ENCODE measurements at regions of chr6 and their contacts with region 1.

Region 1: GRCh38 chr6:52670502-52671409 is at the start of gene TMEM14A:
- DNase-seq: peak; percentile 75 to 96 (median 90)
- ATAC-seq: peak; percentile 97
- H3K4me3 ChIP-seq: peak within 1 kb of the TSS; percentile 78 to 83
- H3K4me3 Mint-ChIP-seq: peak within 1 kb of the TSS; percentile 90
- H3K27ac ChIP-seq: peak within 1 kb of the TSS; percentile 28 to 36
- H3K27ac Mint-ChIP-seq: peak within 1 kb of the TSS; percentile 81
- H3K4me1 ChIP-seq: peaks cover 13% of the 10 kb centered on the region
- H3K4me1 Mint-ChIP-seq: peaks cover 30% of the 10 kb centered on the region
- H3K27me3 ChIP-seq: no peaks in the 10 kb centered on the region
- H3K27me3 Mint-ChIP-seq: no peaks in the 10 kb centered on the region
- CTCF ChIP-seq: no peak
- total RNA-seq, gene TMEM14A: 1.7 to 1.8 TPM

Region 2: DNA sequence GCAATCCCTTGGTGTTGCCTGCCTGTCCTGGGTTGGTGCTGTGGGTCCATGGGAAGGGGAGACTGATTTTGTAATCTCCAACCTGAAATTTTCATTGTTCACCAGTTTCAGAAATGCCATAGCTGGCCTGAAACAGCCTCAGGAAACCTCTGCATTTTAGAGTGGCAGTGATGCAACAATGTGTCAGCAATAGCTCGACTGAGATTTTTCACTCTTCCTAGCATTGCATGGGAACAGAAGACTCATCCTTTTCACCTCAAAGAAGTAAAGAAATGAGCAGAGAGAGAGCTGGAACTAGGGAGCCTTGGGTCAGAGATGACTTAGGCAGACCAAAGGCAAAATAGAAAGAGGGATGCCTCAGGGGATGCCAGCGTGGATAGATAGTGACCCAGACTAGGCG is 23.6 kb before region 1 on chr6:
- CTCF ChIA-PET with region 1: interaction called, 23 read pairs
- POLR2A ChIA-PET with region 1: no interaction called
- intact Hi-C with region 1: loop called in 1 of 2 experiments (anchors 2 kb)
- DNase-seq: no peak
- ATAC-seq: no peak
- H3K4me3 ChIP-seq: no peak overlapping the region
- H3K4me3 Mint-ChIP-seq: no peak overlapping the region
- H3K27ac ChIP-seq: no peak overlapping the region
- H3K27ac Mint-ChIP-seq: no peak overlapping the region
- H3K4me1 ChIP-seq: no peaks in the 10 kb centered on the region
- H3K4me1 Mint-ChIP-seq: peaks cover 5% of the 10 kb centered on the region
- H3K27me3 ChIP-seq: no peaks in the 10 kb centered on the region
- H3K27me3 Mint-ChIP-seq: peaks cover 8% of the 10 kb centered on the region
- CTCF ChIP-seq: no peak

Region 3: GRCh38 chr6:52653151-52653550 is 17.6 kb before region 1 on chr6:
- CTCF ChIA-PET with region 1: interaction called, 23 read pairs
- POLR2A ChIA-PET with region 1: no interaction called
- intact Hi-C with region 1: loop called in 1 of 2 experiments (anchors 2 kb)
- DNase-seq: no peak
- ATAC-seq: no peak
- H3K4me3 ChIP-seq: no peak overlapping the region
- H3K4me3 Mint-ChIP-seq: no peak overlapping the region
- H3K27ac ChIP-seq: no peak overlapping the region
- H3K27ac Mint-ChIP-seq: no peak overlapping the region
- H3K4me1 ChIP-seq: no peaks in the 10 kb centered on the region
- H3K4me1 Mint-ChIP-seq: peaks cover 5% of the 10 kb centered on the region
- H3K27me3 ChIP-seq: peaks cover 0 to 2% of the 10 kb centered on the region in 2 experiments
- H3K27me3 Mint-ChIP-seq: peaks cover 8% of the 10 kb centered on the region
- CTCF ChIP-seq: no peak

Region 4: DNA sequence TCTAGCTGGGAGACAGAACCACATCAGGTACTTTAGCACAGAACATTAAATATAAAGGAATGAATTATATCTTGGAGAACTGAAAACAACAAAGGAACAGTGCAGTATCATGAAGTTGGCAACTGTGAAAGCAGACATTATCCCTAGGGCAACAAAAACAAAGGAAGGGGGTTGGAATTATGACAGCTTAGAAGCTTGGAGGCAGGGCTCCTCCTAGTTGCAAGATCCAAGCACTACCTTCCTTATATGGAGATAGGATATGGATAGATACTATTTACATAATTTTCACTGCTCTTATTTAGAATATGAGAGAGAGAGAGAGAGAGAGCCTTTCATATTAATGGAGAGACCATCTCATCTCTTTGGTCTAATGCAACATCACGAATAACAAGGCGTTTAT is 27.1 kb after region 1 on chr6:
- CTCF ChIA-PET with region 1: no interaction called
- POLR2A ChIA-PET with region 1: no interaction called
- intact Hi-C with region 1: no loop called
- DNase-seq: no peak
- ATAC-seq: no peak
- H3K4me3 ChIP-seq: no peak overlapping the region
- H3K4me3 Mint-ChIP-seq: no peak overlapping the region
- H3K27ac ChIP-seq: no peak overlapping the region
- H3K27ac Mint-ChIP-seq: no peak overlapping the region
- H3K4me1 ChIP-seq: no peaks in the 10 kb centered on the region
- H3K4me1 Mint-ChIP-seq: no peaks in the 10 kb centered on the region
- H3K27me3 ChIP-seq: no peaks in the 10 kb centered on the region
- H3K27me3 Mint-ChIP-seq: peaks cover 16% of the 10 kb centered on the region
- CTCF ChIP-seq: no peak

Region 5: GRCh38 chr6:53064726-53065215 is 394.0 kb after region 1 on chr6:
- CTCF ChIA-PET with region 1: no interaction called
- POLR2A ChIA-PET with region 1: no interaction called
- intact Hi-C with region 1: loop called (anchors 1 to 5 kb)
- DNase-seq: peak; percentile 90 to 98 (median 96)
- ATAC-seq: peak; percentile 83
- H3K4me3 ChIP-seq: peak overlapping the region; percentile 79 to 83
- H3K4me3 Mint-ChIP-seq: peak overlapping the region; percentile 100
- H3K27ac ChIP-seq: peak overlapping the region; percentile 55 to 81
- H3K27ac Mint-ChIP-seq: peak overlapping the region; percentile 98
- H3K4me1 ChIP-seq: peaks cover 39% of the 10 kb centered on the region
- H3K4me1 Mint-ChIP-seq: peaks cover 60% of the 10 kb centered on the region
- H3K27me3 ChIP-seq: no peaks in the 10 kb centered on the region
- H3K27me3 Mint-ChIP-seq: no peaks in the 10 kb centered on the region
- CTCF ChIP-seq: no peak

Region 6: DNA sequence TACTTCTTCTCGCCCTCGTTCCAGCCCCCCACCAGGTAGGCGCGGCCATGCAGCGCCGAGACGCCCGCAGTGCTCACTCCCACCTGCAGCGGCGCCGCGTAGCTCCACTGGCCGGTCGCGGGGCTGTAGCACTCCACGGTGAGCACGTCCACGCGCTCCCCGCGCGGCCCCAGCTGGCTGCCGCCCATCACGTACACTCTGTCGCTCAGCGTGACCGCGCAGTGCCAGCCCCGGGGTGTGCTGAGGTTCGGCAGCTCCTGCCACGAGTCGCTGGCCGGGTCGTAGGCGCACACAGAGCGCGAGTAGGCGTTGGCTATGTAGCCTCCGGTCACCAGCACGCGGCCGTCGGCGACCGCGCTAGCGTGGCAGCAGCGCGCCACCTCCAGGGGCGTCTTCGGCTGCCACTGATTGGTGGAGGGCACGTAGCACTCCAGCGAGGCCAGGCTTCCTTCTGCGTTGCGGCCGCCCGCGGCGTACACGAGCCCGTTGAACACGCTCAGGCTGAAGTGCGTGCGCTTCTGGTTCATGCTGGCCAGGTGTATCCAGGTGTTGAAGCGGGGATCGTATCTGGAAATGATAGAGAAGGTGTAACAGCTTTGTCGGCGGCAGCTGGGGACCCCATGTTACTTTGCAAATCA is 981.1 kb after region 1 on chr6:
- CTCF ChIA-PET with region 1: no interaction called
- POLR2A ChIA-PET with region 1: no interaction called
- intact Hi-C with region 1: loop called in 1 of 2 experiments (anchors 5 kb)
- DNase-seq: peak; percentile 57 to 91 (median 79)
- ATAC-seq: peak; percentile 86
- H3K4me3 ChIP-seq: peak overlapping the region; percentile 67 to 81
- H3K4me3 Mint-ChIP-seq: peak overlapping the region; percentile 91
- H3K27ac ChIP-seq: peak overlapping the region; percentile 54 to 65
- H3K27ac Mint-ChIP-seq: peak overlapping the region; percentile 89
- H3K4me1 ChIP-seq: peaks cover 32% of the 10 kb centered on the region
- H3K4me1 Mint-ChIP-seq: peaks cover 32% of the 10 kb centered on the region
- H3K27me3 ChIP-seq: no peaks in the 10 kb centered on the region
- H3K27me3 Mint-ChIP-seq: no peaks in the 10 kb centered on the region
- CTCF ChIP-seq: no peak

Measured in CD8-positive, alpha-beta T cell (primary cell).